ENCODE measurements at regions of chr3 and their contacts with region 1.

Region 1: DNA sequence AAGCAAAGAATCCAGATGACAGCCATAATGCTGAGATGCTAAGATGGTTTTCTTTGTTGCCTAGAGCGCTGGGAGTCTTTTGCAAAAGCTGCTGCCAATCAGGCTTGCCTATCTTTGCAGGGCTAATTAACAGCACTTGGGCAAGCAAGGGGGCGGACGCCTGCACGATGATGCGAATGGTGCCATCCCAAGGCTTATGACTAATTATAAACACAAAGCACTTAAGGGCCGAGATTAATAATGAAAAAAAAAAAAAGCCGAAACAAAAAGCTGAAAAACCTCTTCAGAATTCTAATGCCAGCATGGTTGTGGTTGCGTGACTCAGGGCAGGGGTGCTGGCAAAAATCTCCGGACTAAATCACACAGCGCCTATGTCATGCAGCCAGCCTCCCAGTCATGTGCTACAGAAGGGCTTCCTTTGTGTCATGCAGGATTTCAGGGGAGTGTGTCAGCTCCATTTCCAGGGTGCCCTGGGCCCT is 184.9 kb upstream of the ANKRD28 start:
- DNase-seq: no peak

Region 2: GRCh38 chr3:15823092-15823491 is 159.6 kb before region 1 on chr3:
- intact Hi-C with region 1: no loop called
- DNase-seq: no peak

Region 3: DNA sequence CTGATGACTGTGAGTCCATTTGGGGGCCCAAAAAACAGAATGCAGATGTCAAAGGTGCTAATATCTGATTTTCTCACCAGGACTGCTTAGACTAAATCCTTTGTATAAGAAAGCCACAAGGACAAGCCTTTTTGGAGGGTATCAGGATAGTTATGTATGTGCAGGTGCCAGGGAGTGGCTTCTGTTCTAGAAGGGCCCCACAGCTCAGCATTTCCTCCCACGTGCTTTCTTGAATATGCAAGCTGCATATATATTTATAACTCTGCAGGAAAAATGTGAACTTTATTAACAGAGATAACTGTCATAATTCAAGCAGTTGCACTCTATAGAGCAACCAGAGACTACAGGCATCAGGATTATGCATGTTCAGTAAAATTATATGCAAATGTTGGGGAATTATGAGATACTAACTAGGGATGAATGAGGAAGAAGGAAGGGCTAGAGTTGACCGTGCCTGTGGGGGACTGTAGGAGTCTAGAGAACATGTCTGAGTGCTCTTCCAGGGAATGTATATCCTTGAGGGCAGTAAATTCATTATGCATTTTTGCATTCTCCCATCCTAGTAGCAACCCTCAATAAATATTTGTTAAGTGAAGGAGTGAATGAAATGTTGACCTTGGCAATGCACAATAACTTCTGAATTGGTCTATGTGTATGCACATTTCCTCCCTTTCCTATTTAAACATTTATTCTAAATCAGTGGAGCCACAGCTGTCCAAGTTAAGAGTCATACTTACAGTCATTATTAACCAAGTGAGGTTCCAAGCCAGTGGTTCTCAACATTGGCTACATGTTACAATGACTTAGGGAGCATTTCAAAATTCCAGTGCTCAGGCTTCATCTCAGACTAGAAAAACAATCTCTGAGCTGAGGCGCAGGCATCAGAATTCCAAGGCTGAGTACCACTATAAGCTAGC is 90.1 kb before region 1 on chr3:
- intact Hi-C with region 1: loop called (anchors 5 kb)
- DNase-seq: no peak

Region 4: GRCh38 chr3:15903759-15904720 is 78.7 kb before region 1 on chr3:
- intact Hi-C with region 1: loop called (anchors 2 kb)
- DNase-seq: peak; percentile 82

Region 5: GRCh38 chr3:15998907-15999306 is 16.2 kb after region 1 on chr3:
- intact Hi-C with region 1: no loop called
- DNase-seq: no peak

Measured in cardiac septum (tissue), 1 donor.